ENCODE measurements at regions of chr6 and their contacts with region 1.

Region 1: GRCh38 chr6:118800394-118801071 is 93.4 kb upstream of the ASF1A start:
- DNase-seq: peak; percentile 87 to 90 (median 87)
- H3K4me3 ChIP-seq: no peak overlapping the region
- H3K4me3 Mint-ChIP-seq: peak overlapping the region; percentile 52 to 86 (median 65)
- H3K27ac ChIP-seq: peak overlapping the region; percentile 11
- H3K27ac Mint-ChIP-seq: peak overlapping the region; percentile 71 to 96 (median 93)
- H3K4me1 ChIP-seq: peaks cover 30% of the 10 kb centered on the region
- H3K4me1 Mint-ChIP-seq: peaks cover 29 to 53% (median 39%) of the 10 kb centered on the region in 4 donors
- H3K27me3 ChIP-seq: no peaks in the 10 kb centered on the region
- H3K27me3 Mint-ChIP-seq: no peaks in the 10 kb centered on the region

Region 2: DNA sequence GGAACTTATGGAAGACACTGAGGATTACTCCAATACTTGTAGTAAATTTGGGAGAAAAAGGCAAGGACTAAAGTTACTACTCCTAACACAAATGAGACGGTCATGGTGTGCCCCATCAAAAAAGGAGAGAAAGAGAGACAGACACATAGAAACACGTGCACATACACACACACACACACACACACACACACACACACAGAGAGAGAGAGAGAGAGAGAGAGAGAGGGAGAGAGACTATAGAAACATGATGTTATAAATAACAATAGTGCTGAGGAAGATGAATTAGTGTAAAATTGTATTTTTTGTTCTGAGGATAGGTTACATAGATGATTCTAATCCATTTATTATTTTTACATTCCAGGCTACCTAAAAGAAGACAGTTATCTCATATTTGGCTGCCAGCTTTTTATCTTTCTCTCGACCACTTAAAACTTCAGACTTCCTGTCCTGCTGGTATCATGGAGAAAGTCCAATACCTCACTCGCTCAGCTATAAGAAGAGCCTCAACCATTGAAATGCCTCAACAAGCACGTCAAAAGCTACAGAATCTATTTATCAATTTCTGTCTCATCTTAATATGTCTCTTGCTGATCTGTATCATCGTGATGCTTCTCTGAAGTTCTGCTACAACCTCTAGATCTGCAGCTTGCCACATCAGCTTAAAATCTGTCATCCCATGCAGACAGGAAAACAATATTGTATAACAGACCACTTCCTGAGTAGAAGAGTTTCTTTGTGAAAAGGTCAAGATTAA is 241.9 kb before region 1 on chr6:
- CTCF ChIA-PET with region 1: interaction called, 38 read pairs
- POLR2A ChIA-PET with region 1: interaction called, 8 read pairs
- intact Hi-C with region 1: no loop called
- DNase-seq: peak; percentile 61 to 77 (median 64)
- H3K4me3 ChIP-seq: peak overlapping the region in 1 of 2 donors; percentile 21
- H3K4me3 Mint-ChIP-seq: peak overlapping the region; percentile 61 to 90 (median 80)
- H3K27ac ChIP-seq: peak overlapping the region; percentile 53
- H3K27ac Mint-ChIP-seq: peak overlapping the region; percentile 83 to 99 (median 97)
- H3K4me1 ChIP-seq: peaks cover 30% of the 10 kb centered on the region
- H3K4me1 Mint-ChIP-seq: peaks cover 31 to 57% (median 35%) of the 10 kb centered on the region in 4 donors
- H3K27me3 ChIP-seq: no peaks in the 10 kb centered on the region
- H3K27me3 Mint-ChIP-seq: no peaks in the 10 kb centered on the region

Region 3: GRCh38 chr6:118697554-118697953 is 103.0 kb before region 1 on chr6:
- CTCF ChIA-PET with region 1: interaction called, 11 read pairs
- POLR2A ChIA-PET with region 1: interaction called, 3 read pairs
- intact Hi-C with region 1: loop called (anchors 2 kb)
- DNase-seq: no peak
- H3K4me3 ChIP-seq: no peak overlapping the region
- H3K4me3 Mint-ChIP-seq: no peak overlapping the region
- H3K27ac ChIP-seq: no peak overlapping the region
- H3K27ac Mint-ChIP-seq: peak overlapping the region in 2 of 7 donors; percentile 0 to 23
- H3K4me1 ChIP-seq: peaks cover 64% of the 10 kb centered on the region
- H3K4me1 Mint-ChIP-seq: peaks cover 49 to 88% (median 65%) of the 10 kb centered on the region in 4 donors
- H3K27me3 ChIP-seq: no peaks in the 10 kb centered on the region
- H3K27me3 Mint-ChIP-seq: no peaks in the 10 kb centered on the region

Region 4: DNA sequence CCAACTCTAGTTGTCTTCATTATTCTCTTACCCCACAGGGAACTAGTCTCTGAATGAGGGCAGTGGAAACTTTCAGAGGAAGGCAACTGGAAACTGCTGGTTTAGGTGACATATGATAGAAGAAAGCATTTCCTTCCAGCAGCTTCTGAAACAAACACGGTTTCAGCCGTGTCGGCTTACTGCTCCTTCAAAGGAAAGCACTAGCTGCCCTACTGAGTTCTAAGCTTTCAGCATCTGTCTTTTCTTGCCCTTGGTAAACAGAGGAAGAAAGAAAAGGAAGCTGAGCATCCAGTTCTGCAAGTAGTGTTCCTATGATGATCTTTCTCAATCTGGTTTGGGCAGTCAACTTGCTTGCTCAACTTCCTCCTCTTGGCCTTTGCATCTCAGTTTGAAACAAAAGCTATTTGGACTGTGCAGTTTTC is 31.6 kb before region 1 on chr6:
- CTCF ChIA-PET with region 1: interaction called, 72 read pairs
- POLR2A ChIA-PET with region 1: interaction called, 4 read pairs
- intact Hi-C with region 1: loop called (anchors 5 kb)
- DNase-seq: peak in 4 of 5 donors; percentile 21 to 31 (median 30)
- H3K4me3 ChIP-seq: no peak overlapping the region
- H3K4me3 Mint-ChIP-seq: peak overlapping the region in 7 of 8 donors; percentile 23 to 71 (median 48)
- H3K27ac ChIP-seq: peak overlapping the region; percentile 14
- H3K27ac Mint-ChIP-seq: peak overlapping the region; percentile 74 to 89 (median 81)
- H3K4me1 ChIP-seq: peaks cover 18% of the 10 kb centered on the region
- H3K4me1 Mint-ChIP-seq: peaks cover 11 to 31% (median 23%) of the 10 kb centered on the region in 4 donors
- H3K27me3 ChIP-seq: no peaks in the 10 kb centered on the region
- H3K27me3 Mint-ChIP-seq: no peaks in the 10 kb centered on the region

Region 5: GRCh38 chr6:118776607-118777549 is 23.7 kb before region 1 on chr6:
- CTCF ChIA-PET with region 1: interaction called, 72 read pairs
- POLR2A ChIA-PET with region 1: interaction called, 12 read pairs
- intact Hi-C with region 1: loop called (anchors 1 kb)
- DNase-seq: peak; percentile 63 to 73 (median 71)
- H3K4me3 ChIP-seq: no peak overlapping the region
- H3K4me3 Mint-ChIP-seq: peak overlapping the region in 6 of 8 donors; percentile 2 to 71 (median 50)
- H3K27ac ChIP-seq: no peak overlapping the region
- H3K27ac Mint-ChIP-seq: peak overlapping the region; percentile 16 to 90 (median 74)
- H3K4me1 ChIP-seq: peaks cover 21% of the 10 kb centered on the region
- H3K4me1 Mint-ChIP-seq: peaks cover 17 to 26% (median 21%) of the 10 kb centered on the region in 4 donors
- H3K27me3 ChIP-seq: no peaks in the 10 kb centered on the region
- H3K27me3 Mint-ChIP-seq: no peaks in the 10 kb centered on the region

Region 6: DNA sequence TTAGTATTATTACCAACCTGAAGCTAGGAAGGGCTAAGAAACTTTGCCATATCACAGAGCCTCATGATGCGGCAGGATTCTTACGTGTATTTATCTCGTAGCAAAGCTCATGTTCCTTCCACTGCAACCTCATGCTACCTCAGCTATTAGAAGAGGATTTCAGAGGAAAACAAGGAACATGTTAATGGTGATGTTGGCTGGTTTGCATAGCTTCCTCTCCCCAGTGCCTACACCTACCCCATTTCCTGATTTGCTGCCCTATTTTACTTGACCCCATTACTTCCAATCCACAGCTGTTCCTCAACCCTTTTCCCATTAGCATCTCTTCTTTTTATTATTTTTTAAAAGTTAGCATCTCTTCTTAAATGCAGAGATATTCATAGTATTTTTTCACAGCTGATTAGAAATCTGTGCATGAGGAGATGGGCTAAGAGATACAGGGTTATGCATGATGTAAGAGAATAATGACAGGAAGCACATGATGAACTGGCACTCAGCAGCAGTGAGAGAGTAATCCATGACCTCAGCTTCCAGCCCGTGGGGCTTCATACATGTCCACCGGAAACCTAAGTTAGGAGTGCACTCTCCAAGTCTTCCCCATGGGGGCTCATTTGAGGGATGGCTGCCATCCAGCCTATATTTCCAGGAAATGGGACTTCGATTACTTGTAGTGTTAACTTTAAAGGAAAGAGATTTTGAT is 12.7 kb before region 1 on chr6:
- CTCF ChIA-PET with region 1: interaction called, 38 read pairs
- POLR2A ChIA-PET with region 1: interaction called, 31 read pairs
- intact Hi-C with region 1: loop called (anchors 1 kb)
- DNase-seq: peak; percentile 38 to 58 (median 54)
- H3K4me3 ChIP-seq: no peak overlapping the region
- H3K4me3 Mint-ChIP-seq: peak overlapping the region in 7 of 8 donors; percentile 8 to 74 (median 59)
- H3K27ac ChIP-seq: peak overlapping the region; percentile 18
- H3K27ac Mint-ChIP-seq: peak overlapping the region; percentile 77 to 97 (median 95)
- H3K4me1 ChIP-seq: peaks cover 29% of the 10 kb centered on the region
- H3K4me1 Mint-ChIP-seq: peaks cover 27 to 40% (median 34%) of the 10 kb centered on the region in 4 donors
- H3K27me3 ChIP-seq: no peaks in the 10 kb centered on the region
- H3K27me3 Mint-ChIP-seq: no peaks in the 10 kb centered on the region

Region 7: GRCh38 chr6:118912646-118913045 is 112.1 kb after region 1 on chr6:
- CTCF ChIA-PET with region 1: no interaction called
- POLR2A ChIA-PET with region 1: no interaction called
- intact Hi-C with region 1: no loop called
- DNase-seq: no peak
- H3K4me3 ChIP-seq: no peak overlapping the region
- H3K4me3 Mint-ChIP-seq: no peak overlapping the region
- H3K27ac ChIP-seq: no peak overlapping the region
- H3K27ac Mint-ChIP-seq: peak overlapping the region in 1 of 7 donors; percentile 43
- H3K4me1 ChIP-seq: no peaks in the 10 kb centered on the region
- H3K4me1 Mint-ChIP-seq: peaks cover 2 to 4% (median 3%) of the 10 kb centered on the region in 4 donors
- H3K27me3 ChIP-seq: no peaks in the 10 kb centered on the region
- H3K27me3 Mint-ChIP-seq: no peaks in the 10 kb centered on the region

Region 8: DNA sequence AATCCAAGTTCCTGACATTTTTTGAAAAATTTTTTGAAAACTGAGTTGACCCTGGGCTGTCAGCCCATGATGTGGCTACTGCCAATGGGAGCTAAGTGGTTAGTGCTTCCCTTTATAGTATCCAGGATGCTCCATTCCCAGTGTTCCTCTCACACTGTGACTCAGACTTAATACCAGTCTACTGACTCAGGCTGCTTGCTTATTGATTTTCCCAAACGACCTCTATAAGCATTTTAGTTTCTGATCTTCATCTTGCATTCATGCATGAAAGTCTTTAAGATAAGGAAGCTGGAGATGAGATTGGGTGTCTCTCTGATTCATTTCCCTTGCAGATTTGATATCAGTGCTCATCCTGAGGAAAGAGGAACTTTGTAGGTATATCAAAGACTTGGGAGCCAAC is 1973.7 kb after region 1 on chr6:
- CTCF ChIA-PET with region 1: no interaction called
- POLR2A ChIA-PET with region 1: no interaction called
- intact Hi-C with region 1: no loop called
- DNase-seq: no peak
- H3K4me3 ChIP-seq: no peak overlapping the region
- H3K4me3 Mint-ChIP-seq: no peak overlapping the region
- H3K27ac ChIP-seq: no peak overlapping the region
- H3K27ac Mint-ChIP-seq: no peak overlapping the region
- H3K4me1 ChIP-seq: no peaks in the 10 kb centered on the region
- H3K4me1 Mint-ChIP-seq: no peaks in the 10 kb centered on the region
- H3K27me3 ChIP-seq: no peaks in the 10 kb centered on the region
- H3K27me3 Mint-ChIP-seq: no peaks in the 10 kb centered on the region

Measured in CD4-positive, alpha-beta memory T cell (primary cell).